Activated naive CD4-positive, alpha-beta T cell treated with anti-CD3 and anti-CD28 coated beads for 36 hours (primary cell): ENCODE measurements at regions of chr7 and their contacts with region 1.

Region 1: GRCh38 chr7:26376175-26376917 is 84.7 kb downstream of the SNX10 start:
- DNase-seq: peak; percentile 60
- H3K4me3 Mint-ChIP-seq: peak overlapping the region; percentile 78
- H3K27ac Mint-ChIP-seq: no peak overlapping the region
- H3K4me1 Mint-ChIP-seq: no peaks in the 10 kb centered on the region
- H3K27me3 Mint-ChIP-seq: peaks cover 36% of the 10 kb centered on the region

Region 2: GRCh38 chr7:26167301-26167934 is 208.9 kb before region 1 on chr7:
- CTCF ChIA-PET with region 1: no interaction called
- intact Hi-C with region 1: no loop called
- DNase-seq: peak; percentile 79
- H3K4me3 Mint-ChIP-seq: peak overlapping the region; percentile 23
- H3K27ac Mint-ChIP-seq: peak overlapping the region; percentile 94
- H3K4me1 Mint-ChIP-seq: peaks cover 40% of the 10 kb centered on the region
- H3K27me3 Mint-ChIP-seq: no peaks in the 10 kb centered on the region

Region 3: DNA sequence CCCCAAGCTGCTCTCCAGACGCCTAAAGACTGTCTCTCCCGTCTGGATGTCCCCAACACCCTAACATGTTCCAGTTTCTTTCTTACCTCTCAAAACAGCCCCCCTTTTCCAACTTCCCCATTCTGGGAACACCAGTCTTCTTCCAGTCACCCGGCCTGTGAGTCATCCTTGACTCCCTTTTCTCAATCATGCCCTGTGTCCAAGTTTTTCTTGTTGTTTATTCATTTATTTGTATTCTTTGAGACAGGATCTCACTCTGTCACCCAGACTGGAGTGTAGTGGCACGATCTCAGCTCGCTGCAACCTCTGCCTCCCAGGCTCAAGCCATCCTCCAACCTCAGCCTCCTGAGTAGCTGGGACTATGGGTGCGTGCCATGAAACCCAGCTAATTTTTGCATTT is 69.1 kb before region 1 on chr7:
- CTCF ChIA-PET with region 1: no interaction called
- intact Hi-C with region 1: no loop called
- DNase-seq: no peak
- H3K4me3 Mint-ChIP-seq: no peak overlapping the region
- H3K27ac Mint-ChIP-seq: no peak overlapping the region
- H3K4me1 Mint-ChIP-seq: peaks cover 14% of the 10 kb centered on the region
- H3K27me3 Mint-ChIP-seq: no peaks in the 10 kb centered on the region

Region 4: DNA sequence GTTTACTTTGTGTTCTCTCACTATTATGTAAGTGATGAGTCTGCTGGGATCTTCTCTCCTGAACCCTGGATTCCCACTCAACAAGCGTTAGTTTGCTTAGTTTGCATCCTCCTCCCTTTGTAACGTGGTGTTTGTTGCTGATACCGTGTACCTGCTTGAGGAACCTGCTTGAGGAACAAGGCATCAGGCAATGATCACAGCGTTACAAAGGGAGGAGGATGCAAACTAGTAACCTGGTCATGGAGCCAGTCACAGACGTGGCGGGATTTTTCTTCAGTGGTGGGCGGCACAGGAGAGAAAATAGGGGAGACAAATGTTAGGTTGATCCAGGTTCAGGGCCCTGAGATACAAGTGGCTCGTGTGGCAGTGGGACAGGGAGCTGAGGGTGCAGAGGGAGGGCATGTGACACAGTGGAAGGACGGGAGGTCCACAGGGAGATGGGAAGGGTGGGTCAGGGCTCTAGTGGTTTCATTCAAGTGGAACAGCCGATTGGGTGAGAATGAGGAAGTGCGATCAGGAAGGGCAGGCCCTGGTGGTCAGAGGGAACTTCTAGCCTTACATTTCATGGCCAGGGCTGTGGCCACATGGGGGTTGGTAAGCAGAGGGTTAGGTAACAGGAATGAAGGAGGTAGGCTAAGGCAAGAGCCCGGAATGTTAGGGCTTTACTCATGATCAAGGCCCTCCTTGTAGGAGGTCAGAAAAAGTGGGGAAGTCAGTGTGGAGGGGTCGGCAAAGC is 46.7 kb before region 1 on chr7:
- CTCF ChIA-PET with region 1: no interaction called
- intact Hi-C with region 1: no loop called
- DNase-seq: no peak
- H3K4me3 Mint-ChIP-seq: no peak overlapping the region
- H3K27ac Mint-ChIP-seq: no peak overlapping the region
- H3K4me1 Mint-ChIP-seq: peaks cover 7% of the 10 kb centered on the region
- H3K27me3 Mint-ChIP-seq: no peaks in the 10 kb centered on the region

Region 5: GRCh38 chr7:26398756-26399501 is 22.6 kb after region 1 on chr7:
- CTCF ChIA-PET with region 1: interaction called, 4 read pairs
- intact Hi-C with region 1: loop called (anchors 1 kb)
- DNase-seq: peak; percentile 56
- H3K4me3 Mint-ChIP-seq: peak overlapping the region; percentile 92
- H3K27ac Mint-ChIP-seq: no peak overlapping the region
- H3K4me1 Mint-ChIP-seq: peaks cover 5% of the 10 kb centered on the region
- H3K27me3 Mint-ChIP-seq: peaks cover 40% of the 10 kb centered on the region

Region 6: DNA sequence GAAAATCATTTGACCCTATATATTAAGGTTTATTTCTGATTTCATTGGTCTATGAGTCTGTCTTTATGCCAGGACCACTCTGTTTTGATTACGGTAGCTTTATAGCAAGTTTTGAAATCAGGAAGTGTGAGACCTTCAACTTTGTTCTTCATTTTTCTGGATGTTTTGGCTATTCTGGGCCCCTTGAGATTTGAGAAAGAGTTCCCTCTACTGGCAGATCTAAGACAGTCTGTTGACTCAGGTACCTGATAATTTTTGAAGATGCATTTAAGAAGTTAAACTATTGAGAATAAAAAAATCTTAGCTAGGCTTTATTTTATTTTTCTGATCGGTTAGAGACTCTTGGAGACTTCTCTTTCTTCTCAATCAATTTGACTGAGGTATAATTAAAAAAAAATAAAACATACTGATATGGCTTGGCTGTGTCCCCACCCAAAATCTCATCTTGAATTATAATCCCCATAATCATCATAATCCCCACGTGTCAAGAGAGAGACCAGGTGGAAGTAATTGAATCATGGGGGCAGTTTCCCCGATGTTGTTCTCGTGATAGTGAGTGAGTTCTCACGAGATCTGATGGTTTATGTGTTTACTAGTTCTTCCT is 124.5 kb after region 1 on chr7:
- CTCF ChIA-PET with region 1: interaction called, 4 read pairs
- intact Hi-C with region 1: loop called (anchors 1 kb)
- DNase-seq: no peak
- H3K4me3 Mint-ChIP-seq: no peak overlapping the region
- H3K27ac Mint-ChIP-seq: no peak overlapping the region
- H3K4me1 Mint-ChIP-seq: no peaks in the 10 kb centered on the region
- H3K27me3 Mint-ChIP-seq: peaks cover 3% of the 10 kb centered on the region

Region 7: DNA sequence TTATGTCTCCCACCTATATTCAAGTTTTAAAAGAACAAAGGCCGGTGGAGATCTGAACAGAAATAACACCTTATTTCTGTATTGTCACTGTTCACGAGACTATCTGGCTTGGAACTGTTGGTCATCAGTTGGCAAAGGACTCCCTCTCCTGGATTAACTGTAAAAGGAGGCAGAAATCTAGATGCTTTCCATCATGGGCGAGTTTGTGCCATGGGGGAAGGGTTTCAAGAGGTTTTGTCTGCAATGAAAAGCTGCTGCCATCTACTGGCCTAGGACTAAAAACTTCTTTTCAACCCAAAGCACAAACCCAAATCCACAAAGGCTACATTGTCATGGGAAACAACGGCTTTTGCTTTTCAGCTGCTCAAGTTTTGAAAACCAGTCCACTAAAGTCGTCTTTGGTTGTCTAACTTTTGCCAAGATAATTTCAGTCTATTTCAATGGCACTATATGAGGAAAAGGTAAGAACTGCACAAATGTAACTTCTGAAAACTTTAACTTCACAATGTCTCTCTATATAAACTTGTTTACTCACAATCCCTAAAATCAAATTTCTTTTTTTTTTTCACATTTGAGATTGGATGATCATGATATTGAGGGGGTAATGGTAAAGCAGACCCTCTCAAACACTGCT is 291.3 kb after region 1 on chr7:
- CTCF ChIA-PET with region 1: interaction called, 8 read pairs
- intact Hi-C with region 1: loop called (anchors 1 kb)
- DNase-seq: peak; percentile 78
- H3K4me3 Mint-ChIP-seq: no peak overlapping the region
- H3K27ac Mint-ChIP-seq: no peak overlapping the region
- H3K4me1 Mint-ChIP-seq: peaks cover 19% of the 10 kb centered on the region
- H3K27me3 Mint-ChIP-seq: peaks cover 4% of the 10 kb centered on the region